CD8-positive, alpha-beta memory T cell (primary cell): ENCODE measurements at regions of chr6 and their contacts with region 1.

Region 1: DNA sequence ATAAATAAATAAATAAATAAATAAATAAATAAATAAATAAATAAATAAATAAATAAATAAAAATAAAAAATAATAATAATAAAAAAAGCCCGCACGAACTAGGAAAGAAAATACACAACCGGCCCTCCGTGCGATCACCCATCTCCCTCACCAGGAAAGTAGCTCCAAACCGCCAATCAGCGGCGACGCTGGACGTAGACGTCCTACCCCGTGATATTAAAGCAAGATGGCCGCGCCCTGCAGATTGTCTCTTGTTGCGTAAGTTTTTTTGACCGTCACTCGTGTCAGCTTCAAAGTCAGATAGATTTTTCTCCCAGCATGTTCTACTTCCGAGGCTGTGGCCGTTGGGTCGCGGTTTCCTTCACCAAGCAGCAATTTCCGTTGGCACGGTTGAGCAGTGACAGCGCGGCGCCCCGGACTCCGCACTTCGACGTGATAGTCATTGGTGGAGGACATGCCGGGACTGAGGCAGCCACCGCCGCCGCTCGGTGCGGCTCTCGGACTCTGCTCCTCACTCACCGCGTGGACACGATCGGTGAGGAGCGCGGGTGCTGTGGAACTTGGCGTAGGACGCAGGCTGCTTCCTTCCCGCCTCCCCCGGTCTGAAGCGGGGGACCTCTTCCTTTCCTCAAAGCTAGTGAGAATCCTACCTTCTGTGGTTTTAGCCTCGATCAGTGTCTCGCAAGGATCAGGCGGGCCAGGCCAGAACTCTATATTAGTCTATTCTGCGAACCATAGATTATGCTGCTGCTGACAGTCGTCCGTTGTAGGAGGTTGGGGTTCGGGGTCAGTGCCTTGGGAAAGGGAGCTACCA is at the start of gene MTO1:
- DNase-seq: peak; percentile 77 to 89 (median 82)
- H3K4me3 ChIP-seq: peak within 1 kb of the TSS; percentile 88
- H3K4me3 Mint-ChIP-seq: peak within 1 kb of the TSS; percentile 92 to 98 (median 95)
- H3K27ac ChIP-seq: peak within 1 kb of the TSS; percentile 93
- H3K27ac Mint-ChIP-seq: peak within 1 kb of the TSS; percentile 88 to 99 (median 97)
- H3K4me1 ChIP-seq: peaks cover 22% of the 10 kb centered on the region
- H3K4me1 Mint-ChIP-seq: peaks cover 35 to 66% (median 62%) of the 10 kb centered on the region in 3 donors
- H3K27me3 ChIP-seq: no peaks in the 10 kb centered on the region
- H3K27me3 Mint-ChIP-seq: no peaks in the 10 kb centered on the region
- total RNA-seq, gene MTO1: 44.2 to 48.1 TPM

Region 2: DNA sequence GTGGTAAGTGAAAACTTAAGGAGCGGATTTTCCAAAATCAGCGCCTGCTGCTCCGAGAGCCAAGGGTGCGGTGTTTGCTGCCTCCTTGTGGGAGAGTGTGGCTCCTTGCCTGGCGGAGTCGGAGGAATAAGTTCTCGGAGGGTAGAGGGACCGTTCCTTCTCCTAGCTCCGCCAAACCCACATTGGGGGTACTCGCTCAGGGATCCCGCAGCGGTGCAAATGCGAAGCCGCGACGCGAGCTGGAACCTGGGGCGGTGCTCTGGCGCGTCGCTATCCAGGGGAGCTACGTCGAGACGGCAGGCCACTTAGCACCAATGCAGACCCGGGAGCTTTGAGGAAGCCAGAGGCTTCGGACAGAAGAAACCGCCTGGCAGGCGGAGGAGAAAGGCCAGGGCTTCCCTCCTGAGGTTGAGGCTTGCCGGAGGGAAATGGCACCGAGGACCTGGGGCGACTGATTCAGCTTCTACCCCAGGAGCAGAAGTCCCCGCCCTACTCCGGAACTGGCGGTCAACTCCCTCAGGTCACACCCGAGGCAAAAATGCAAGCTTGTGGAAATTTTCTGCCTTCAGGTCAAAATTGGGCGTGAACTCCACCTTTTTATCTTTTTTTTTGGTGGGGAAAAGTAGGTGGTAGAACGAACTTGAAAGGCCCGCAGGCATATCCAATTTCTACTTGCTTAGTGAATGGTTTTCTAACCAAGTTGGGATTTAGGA is 72.8 kb before region 1 on chr6:
- CTCF ChIA-PET with region 1: interaction called, 10 read pairs
- POLR2A ChIA-PET with region 1: interaction called, 10 read pairs
- DNase-seq: peak; percentile 21 to 67 (median 45)
- H3K4me3 ChIP-seq: peak overlapping the region; percentile 66
- H3K4me3 Mint-ChIP-seq: peak overlapping the region; percentile 78 to 95 (median 86)
- H3K27ac ChIP-seq: peak overlapping the region; percentile 69
- H3K27ac Mint-ChIP-seq: peak overlapping the region; percentile 78 to 95 (median 86)
- H3K4me1 ChIP-seq: peaks cover 8% of the 10 kb centered on the region
- H3K4me1 Mint-ChIP-seq: peaks cover 27 to 36% (median 35%) of the 10 kb centered on the region in 3 donors
- H3K27me3 ChIP-seq: no peaks in the 10 kb centered on the region
- H3K27me3 Mint-ChIP-seq: no peaks in the 10 kb centered on the region

Region 3: DNA sequence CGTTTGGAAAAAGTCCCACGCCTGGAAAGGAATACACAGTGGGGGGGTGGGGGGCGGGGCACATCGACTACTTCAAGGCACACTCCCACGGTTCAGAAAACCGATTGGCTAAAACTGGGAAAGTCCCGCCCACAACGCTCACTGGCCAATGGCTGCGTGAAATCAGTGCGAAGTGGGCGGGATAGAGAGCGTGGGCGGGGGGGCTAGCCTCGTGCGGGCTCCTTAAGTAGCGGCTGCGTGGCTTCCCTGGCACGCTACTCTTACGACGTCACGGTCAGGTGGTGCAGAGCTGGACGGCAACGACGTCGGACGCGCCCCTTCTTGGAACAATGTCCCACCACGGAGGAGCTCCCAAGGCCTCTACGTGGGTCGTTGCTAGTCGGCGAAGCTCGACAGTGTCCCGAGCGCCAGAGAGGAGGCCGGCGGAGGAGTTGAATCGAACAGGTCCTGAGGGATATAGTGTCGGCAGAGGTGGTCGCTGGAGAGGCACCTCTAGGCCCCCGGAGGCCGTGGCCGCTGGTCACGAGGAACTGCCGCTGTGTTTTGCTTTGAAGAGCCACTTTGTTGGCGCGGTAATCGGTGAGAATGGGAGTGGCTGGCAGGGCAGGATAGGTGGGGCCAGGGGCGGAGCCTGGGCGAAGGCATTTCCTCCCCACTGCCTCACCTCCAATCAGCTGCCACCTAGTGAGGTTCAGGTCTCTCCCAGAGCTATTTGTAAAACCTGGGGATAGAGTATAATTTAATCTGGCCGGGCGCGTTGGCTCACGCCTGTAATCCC is 67.0 kb before region 1 on chr6 and contains the start of gene DDX43:
- CTCF ChIA-PET with region 1: interaction called, 10 read pairs
- POLR2A ChIA-PET with region 1: interaction called, 10 read pairs
- DNase-seq: peak; percentile 21 to 79 (median 52)
- H3K4me3 ChIP-seq: no peak within 1 kb of the TSS
- H3K4me3 Mint-ChIP-seq: peak within 1 kb of the TSS; percentile 69 to 97 (median 80)
- H3K27ac ChIP-seq: peak within 1 kb of the TSS; percentile 67
- H3K27ac Mint-ChIP-seq: peak within 1 kb of the TSS; percentile 52 to 94 (median 90)
- H3K4me1 ChIP-seq: no peaks in the 10 kb centered on the region
- H3K4me1 Mint-ChIP-seq: peaks cover 15 to 35% (median 19%) of the 10 kb centered on the region in 3 donors
- H3K27me3 ChIP-seq: no peaks in the 10 kb centered on the region
- H3K27me3 Mint-ChIP-seq: no peaks in the 10 kb centered on the region
- total RNA-seq, gene DDX43: 0.71 to 0.98 TPM

Region 4: DNA sequence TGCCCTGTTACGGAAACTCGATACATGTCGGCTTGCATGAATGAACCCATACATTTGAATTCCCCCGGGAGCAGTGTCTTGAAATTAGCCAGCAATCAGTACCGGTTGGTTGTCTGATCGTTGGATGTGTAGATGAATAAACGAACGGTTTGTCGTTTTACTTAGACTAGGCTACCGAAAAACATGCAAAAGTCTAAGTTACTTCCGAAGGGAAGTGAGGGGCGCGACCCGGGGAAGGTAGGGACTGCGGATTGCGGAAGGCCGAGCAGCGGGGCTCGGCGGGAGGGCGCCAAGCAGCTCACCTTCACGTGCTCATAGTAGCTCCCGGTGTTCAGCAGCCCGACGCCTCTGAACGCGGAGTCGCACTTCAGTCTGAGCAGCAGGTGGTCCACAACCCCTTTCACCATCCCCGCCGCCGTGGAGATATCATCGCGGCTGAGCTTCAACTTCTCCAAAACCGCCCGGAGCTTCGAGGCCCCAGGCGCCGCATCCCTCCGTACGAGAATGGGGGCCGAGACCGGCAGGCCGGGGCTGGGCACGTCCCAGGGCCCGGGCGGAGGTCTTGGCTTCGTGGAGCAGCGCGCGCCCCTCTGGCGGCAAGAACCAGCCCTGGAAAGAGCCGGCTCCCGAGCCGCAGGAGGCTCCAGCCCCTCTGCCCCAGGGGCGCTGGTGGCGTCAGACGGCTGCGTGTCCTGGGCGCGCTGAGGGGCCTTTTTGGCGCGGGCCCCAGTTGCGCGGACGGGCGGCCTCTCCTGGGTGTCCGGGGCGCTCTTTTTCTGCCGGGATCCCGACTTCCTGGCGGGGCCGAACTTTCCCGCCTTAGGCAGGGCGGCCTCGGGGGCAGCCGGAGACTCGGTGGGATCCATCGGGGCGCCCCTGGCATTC is 10.3 kb before region 1 on chr6:
- CTCF ChIA-PET with region 1: interaction called, 34 read pairs
- POLR2A ChIA-PET with region 1: interaction called, 66 read pairs
- DNase-seq: peak; percentile 23 to 65 (median 43)
- H3K4me3 ChIP-seq: peak overlapping the region; percentile 78
- H3K4me3 Mint-ChIP-seq: peak overlapping the region; percentile 94 to 100 (median 97)
- H3K27ac ChIP-seq: peak overlapping the region; percentile 33
- H3K27ac Mint-ChIP-seq: peak overlapping the region; percentile 84 to 99 (median 92)
- H3K4me1 ChIP-seq: peaks cover 15% of the 10 kb centered on the region
- H3K4me1 Mint-ChIP-seq: peaks cover 21 to 44% (median 37%) of the 10 kb centered on the region in 3 donors
- H3K27me3 ChIP-seq: no peaks in the 10 kb centered on the region
- H3K27me3 Mint-ChIP-seq: peaks cover 0 to 2% of the 10 kb centered on the region in 2 donors

Region 5: DNA sequence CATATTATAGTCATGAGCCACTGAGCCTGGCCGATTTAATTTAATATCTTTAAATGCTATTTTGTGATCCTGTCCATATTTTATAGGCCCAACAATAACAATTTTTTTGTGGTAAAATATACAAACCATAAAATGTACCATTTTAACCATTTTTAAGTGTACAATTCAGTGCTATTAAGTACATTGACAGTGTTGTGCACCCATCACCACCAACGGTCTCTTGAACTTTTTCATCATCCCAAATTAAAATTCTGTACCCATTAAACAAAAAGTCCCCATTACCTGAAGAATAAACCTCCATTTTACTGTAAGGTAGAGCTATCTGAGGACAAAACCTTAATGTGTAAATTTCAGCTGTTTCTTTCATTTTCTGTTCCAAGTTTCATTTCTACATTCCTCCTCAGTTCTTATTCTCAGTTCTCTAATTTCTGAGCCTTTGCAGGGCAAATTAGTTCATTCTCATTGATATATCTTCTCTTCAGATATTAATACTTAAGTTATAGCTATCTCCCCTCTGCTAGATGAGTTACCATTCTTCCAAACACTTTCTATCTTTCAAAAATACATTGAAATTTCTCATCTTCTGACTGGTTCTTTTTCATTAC is 10.0 kb after region 1 on chr6:
- CTCF ChIA-PET with region 1: interaction called, 4 read pairs
- POLR2A ChIA-PET with region 1: interaction called, 10 read pairs
- DNase-seq: no peak
- H3K4me3 ChIP-seq: no peak overlapping the region
- H3K4me3 Mint-ChIP-seq: peak overlapping the region in 4 of 7 donors; percentile 16 to 74 (median 54)
- H3K27ac ChIP-seq: no peak overlapping the region
- H3K27ac Mint-ChIP-seq: peak overlapping the region; percentile 6 to 90 (median 68)
- H3K4me1 ChIP-seq: no peaks in the 10 kb centered on the region
- H3K4me1 Mint-ChIP-seq: peaks cover 11 to 23% (median 18%) of the 10 kb centered on the region in 3 donors
- H3K27me3 ChIP-seq: no peaks in the 10 kb centered on the region
- H3K27me3 Mint-ChIP-seq: no peaks in the 10 kb centered on the region

Region 6: GRCh38 chr6:73520688-73521350 is 59.1 kb after region 1 on chr6 and contains the start of gene EEF1A1:
- CTCF ChIA-PET with region 1: interaction called, 12 read pairs
- POLR2A ChIA-PET with region 1: interaction called, 23 read pairs
- DNase-seq: peak; percentile 99 to 100 (median 99)
- H3K4me3 ChIP-seq: peak within 1 kb of the TSS; percentile 98
- H3K4me3 Mint-ChIP-seq: peak within 1 kb of the TSS; percentile 89 to 99 (median 96)
- H3K27ac ChIP-seq: peak within 1 kb of the TSS; percentile 100
- H3K27ac Mint-ChIP-seq: peak within 1 kb of the TSS; percentile 92 to 99 (median 99)
- H3K4me1 ChIP-seq: peaks cover 48% of the 10 kb centered on the region
- H3K4me1 Mint-ChIP-seq: peaks cover 64 to 71% (median 64%) of the 10 kb centered on the region in 3 donors
- H3K27me3 ChIP-seq: no peaks in the 10 kb centered on the region
- H3K27me3 Mint-ChIP-seq: peaks cover 0 to 11% of the 10 kb centered on the region in 2 donors
- total RNA-seq, gene EEF1A1: 8,526 to 8,727 TPM

Region 7: DNA sequence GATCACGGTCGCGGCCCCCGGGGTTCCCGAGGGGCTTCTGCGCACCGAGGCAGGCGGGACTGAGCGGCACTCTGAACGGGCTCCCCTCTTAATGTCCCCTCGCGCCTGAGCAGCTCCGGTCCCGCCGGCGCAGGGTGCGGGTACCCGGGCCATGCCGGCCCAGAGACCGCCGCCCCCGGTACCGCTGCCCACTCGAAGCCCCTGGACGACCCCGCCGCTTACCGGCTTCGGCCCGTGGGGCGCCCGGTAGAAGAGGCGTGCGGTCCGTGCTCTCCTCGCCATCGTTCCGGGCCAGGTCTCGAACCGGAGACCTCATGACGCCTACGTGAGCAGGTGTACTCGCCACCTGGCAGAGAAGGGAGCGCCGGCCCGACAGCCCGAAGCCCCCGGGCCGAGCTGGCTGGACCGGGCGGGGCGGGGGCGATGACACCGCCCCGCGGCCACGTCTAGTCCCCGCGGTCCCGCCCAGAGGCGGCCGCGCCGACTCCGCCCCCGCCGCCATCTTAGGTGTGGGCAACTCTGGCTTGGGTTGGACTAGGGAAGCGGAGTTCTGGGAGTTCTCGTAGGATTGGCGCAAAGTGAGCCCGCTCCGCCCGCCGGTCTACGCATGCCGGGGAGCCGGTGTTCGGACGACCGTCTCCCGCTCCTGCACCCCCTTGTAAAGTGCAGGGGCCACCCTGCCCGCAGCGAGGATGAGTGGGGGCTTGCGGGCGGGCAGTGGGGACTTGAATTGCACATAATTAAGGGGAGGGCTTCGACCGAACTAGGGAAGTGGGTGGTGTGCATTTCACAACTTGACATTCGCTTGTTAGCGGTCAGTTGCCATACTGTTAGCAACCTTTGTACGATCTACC is 192.1 kb after region 1 on chr6 and contains the start of gene SLC17A5:
- CTCF ChIA-PET with region 1: interaction called, 17 read pairs
- POLR2A ChIA-PET with region 1: interaction called, 35 read pairs
- DNase-seq: peak; percentile 82 to 91 (median 87)
- H3K4me3 ChIP-seq: peak within 1 kb of the TSS; percentile 97
- H3K4me3 Mint-ChIP-seq: peak within 1 kb of the TSS; percentile 99 to 100 (median 99)
- H3K27ac ChIP-seq: peak within 1 kb of the TSS; percentile 93
- H3K27ac Mint-ChIP-seq: peak within 1 kb of the TSS; percentile 93 to 99 (median 98)
- H3K4me1 ChIP-seq: peaks cover 22% of the 10 kb centered on the region
- H3K4me1 Mint-ChIP-seq: peaks cover 40 to 47% (median 46%) of the 10 kb centered on the region in 3 donors
- H3K27me3 ChIP-seq: no peaks in the 10 kb centered on the region
- H3K27me3 Mint-ChIP-seq: no peaks in the 10 kb centered on the region
- total RNA-seq, gene SLC17A5: 5.4 to 5.6 TPM